ENCODE measurements at regions of chr1 and their contacts with region 1.

Region 1: DNA sequence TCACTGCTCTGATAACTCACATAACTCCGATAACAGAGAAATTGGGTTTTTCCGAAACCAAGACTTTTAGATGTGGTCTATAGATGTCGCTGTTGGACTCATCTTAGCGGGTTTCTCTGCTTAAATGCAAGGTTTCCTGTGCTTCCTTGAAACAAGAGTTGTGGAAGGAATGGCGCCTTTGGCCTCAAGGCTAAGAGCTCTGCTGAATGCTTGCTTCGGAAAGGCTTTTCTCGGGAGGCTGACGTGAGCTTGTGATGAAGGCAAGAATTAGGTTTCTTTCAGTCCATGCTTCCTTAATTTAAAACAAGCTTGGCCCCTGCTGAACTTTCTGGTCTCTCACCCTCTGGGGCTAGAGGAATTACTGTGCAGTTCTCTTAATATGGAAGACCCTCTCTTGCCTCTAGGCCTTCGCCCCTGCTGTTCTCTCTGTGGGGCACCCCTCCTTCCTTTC is 113.5 kb downstream of the MAP3K21 start:
- DNase-seq: peak; percentile 54
- ATAC-seq: peak; percentile 85
- H3K4me3 ChIP-seq: no peak overlapping the region
- H3K27ac ChIP-seq: no peak overlapping the region
- H3K4me1 ChIP-seq: no peaks in the 10 kb centered on the region
- H3K27me3 ChIP-seq: no peaks in the 10 kb centered on the region
- CTCF ChIP-seq: peak; percentile 60 to 86 (median 66)
- EP300 ChIP-seq: no peak
- POLR2A ChIP-seq: no peak
- RAD21 ChIP-seq: peak; percentile 98

Region 2: GRCh38 chr1:233394860-233395717 is 45.9 kb before region 1 on chr1:
- CTCF ChIA-PET with region 1: interaction called, 9 read pairs
- POLR2A ChIA-PET with region 1: no interaction called
- RAD21 ChIA-PET with region 1: interaction called, 7 read pairs
- SMC1A ChIA-PET with region 1: interaction called, 13 read pairs
- in situ Hi-C with region 1: no loop called
- intact Hi-C with region 1: no loop called
- DNase-seq: no peak
- ATAC-seq: peak; percentile 96
- H3K4me3 ChIP-seq: no peak overlapping the region
- H3K27ac ChIP-seq: no peak overlapping the region
- H3K4me1 ChIP-seq: no peaks in the 10 kb centered on the region
- H3K27me3 ChIP-seq: no peaks in the 10 kb centered on the region; a peak in 1 of 4 replicates
- CTCF ChIP-seq: peak; percentile 76 to 89 (median 77)
- EP300 ChIP-seq: no peak
- POLR2A ChIP-seq: no peak
- RAD21 ChIP-seq: peak; percentile 98

Region 3: DNA sequence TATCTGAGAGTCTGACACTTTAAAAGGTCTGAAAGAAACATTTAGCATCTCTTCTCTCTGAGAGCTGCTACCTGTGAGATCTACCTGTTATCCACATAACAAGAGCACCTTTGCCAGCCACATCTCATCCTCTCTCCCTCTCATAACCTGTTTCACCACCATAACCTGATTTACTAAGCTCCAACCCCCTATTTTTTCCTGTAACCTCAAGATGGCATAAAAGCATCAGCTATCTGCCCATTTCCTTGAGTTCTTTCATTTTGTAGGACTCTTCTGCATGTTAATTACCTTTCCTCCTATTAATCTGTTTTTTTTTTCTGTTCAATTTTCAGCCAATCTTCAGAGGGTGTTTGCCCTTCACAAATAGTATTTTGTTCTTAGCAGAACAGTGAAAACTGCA is 36.4 kb after region 1 on chr1:
- CTCF ChIA-PET with region 1: interaction called, 26 read pairs
- POLR2A ChIA-PET with region 1: no interaction called
- RAD21 ChIA-PET with region 1: interaction called, 13 read pairs
- SMC1A ChIA-PET with region 1: interaction called, 12 read pairs
- in situ Hi-C with region 1: no loop called
- intact Hi-C with region 1: no loop called
- DNase-seq: no peak
- ATAC-seq: no peak
- H3K4me3 ChIP-seq: no peak overlapping the region
- H3K27ac ChIP-seq: no peak overlapping the region
- H3K4me1 ChIP-seq: peaks cover 3% of the 10 kb centered on the region; the same call in 1 of the 2 replicates
- H3K27me3 ChIP-seq: no peaks in the 10 kb centered on the region
- CTCF ChIP-seq: peak in 1 of 3 experiments; percentile 31; a peak in 2 of 6 replicates
- EP300 ChIP-seq: no peak
- POLR2A ChIP-seq: no peak
- RAD21 ChIP-seq: peak; percentile 52

Region 4: DNA sequence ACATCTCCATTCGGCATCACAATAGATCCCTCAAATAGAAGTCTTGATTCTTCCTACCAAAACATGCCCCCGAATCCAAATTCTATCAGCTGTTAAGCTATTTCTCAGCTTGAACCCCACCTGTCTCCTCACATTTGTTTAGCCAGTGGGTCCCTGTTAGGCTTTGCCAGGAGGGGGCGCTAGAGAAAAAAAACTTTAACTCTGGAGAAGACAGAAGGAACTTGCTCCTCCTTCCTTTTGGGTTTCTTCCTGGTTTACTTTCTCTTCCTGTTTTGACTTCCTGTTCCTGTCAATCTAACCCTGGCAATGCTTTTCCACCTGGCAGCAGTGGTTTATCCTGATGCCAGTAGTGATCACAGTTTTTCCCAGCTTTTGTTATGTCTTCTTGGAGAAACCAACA is 77.4 kb after region 1 on chr1:
- CTCF ChIA-PET with region 1: interaction called, 32 read pairs
- POLR2A ChIA-PET with region 1: no interaction called
- RAD21 ChIA-PET with region 1: interaction called, 17 read pairs
- SMC1A ChIA-PET with region 1: interaction called, 24 read pairs
- in situ Hi-C with region 1: no loop called
- intact Hi-C with region 1: loop called (anchors 5 kb)
- DNase-seq: no peak
- ATAC-seq: peak; percentile 76
- H3K4me3 ChIP-seq: no peak overlapping the region
- H3K27ac ChIP-seq: no peak overlapping the region
- H3K4me1 ChIP-seq: no peaks in the 10 kb centered on the region
- H3K27me3 ChIP-seq: no peaks in the 10 kb centered on the region
- CTCF ChIP-seq: peak; percentile 32 to 64 (median 50)
- EP300 ChIP-seq: no peak
- POLR2A ChIP-seq: no peak
- RAD21 ChIP-seq: peak; percentile 67

Region 5: DNA sequence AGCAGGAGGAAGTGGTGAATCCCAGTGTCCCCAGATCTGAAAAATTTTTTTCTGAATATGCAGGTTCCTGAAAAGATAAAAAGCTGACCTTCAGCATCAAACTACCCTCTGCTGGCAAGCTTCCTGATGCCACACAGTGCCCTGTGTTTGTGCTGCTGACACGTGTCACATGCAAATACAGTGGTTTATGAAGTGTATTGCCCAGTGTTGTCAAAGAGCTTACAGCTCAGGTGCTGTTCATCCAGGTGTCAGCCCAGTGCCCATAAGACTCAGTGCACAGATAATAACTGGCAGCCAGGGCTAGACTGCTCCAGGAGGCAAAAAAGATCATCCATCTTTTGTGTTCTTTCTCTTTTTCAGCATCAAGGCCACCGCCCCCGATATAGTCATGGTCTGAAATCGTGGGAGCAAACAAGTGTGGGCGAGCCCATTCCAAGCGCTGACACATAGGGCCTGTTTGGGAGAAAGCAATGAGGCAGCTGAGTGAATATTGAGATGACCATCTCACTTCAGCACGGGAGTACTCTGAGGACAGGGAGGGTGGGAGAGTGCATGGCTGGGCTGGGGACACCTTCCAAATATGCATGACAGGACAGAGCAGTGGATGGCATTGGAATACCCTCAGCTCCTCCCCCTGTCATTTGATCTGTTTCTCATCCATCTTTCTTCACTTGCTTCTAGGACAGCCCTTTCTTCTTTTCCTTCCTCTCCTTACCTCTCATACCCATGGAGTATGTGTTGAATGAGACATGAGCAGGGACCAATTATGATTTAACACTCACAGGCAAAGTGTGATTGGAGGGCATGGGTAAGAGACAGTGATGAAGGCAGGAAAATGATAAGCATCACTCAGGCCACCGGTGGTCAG is 166.5 kb after region 1 on chr1:
- CTCF ChIA-PET with region 1: interaction called, 13 read pairs
- POLR2A ChIA-PET with region 1: no interaction called
- RAD21 ChIA-PET with region 1: interaction called, 3 read pairs
- SMC1A ChIA-PET with region 1: interaction called, 3 read pairs
- in situ Hi-C with region 1: no loop called
- intact Hi-C with region 1: no loop called
- DNase-seq: no peak
- ATAC-seq: peak; percentile 90
- H3K4me3 ChIP-seq: no peak overlapping the region
- H3K27ac ChIP-seq: no peak overlapping the region
- H3K4me1 ChIP-seq: peaks cover 11% of the 10 kb centered on the region
- H3K27me3 ChIP-seq: no peaks in the 10 kb centered on the region
- CTCF ChIP-seq: no peak
- EP300 ChIP-seq: no peak
- POLR2A ChIP-seq: no peak
- RAD21 ChIP-seq: no peak

Region 6: DNA sequence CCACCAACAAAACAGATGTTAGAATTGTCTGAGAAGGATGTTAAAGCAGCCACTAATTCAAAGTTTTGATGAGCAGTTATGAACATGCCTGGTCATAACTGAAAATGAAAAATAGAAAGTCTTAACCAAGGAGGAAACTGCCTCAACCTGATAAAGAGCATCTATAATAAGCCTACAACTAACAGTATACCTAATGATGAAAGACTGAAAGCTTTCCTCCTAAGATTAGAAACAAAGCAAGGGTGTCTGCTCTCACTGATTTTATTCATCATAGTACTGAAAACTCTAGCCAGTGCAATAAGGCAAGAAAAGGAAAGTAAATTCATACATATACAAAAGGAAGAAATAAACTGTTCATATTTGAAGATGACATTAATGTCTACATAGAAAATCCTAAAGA is 254.9 kb after region 1 on chr1:
- CTCF ChIA-PET with region 1: interaction called, 4 read pairs
- POLR2A ChIA-PET with region 1: no interaction called
- RAD21 ChIA-PET with region 1: interaction called, 9 read pairs
- SMC1A ChIA-PET with region 1: interaction called, 18 read pairs
- in situ Hi-C with region 1: no loop called
- intact Hi-C with region 1: no loop called
- DNase-seq: no peak
- ATAC-seq: peak; percentile 75
- H3K4me3 ChIP-seq: no peak overlapping the region
- H3K27ac ChIP-seq: no peak overlapping the region
- H3K4me1 ChIP-seq: peaks cover 5% of the 10 kb centered on the region; the same call in 1 of the 2 replicates
- H3K27me3 ChIP-seq: no peaks in the 10 kb centered on the region
- CTCF ChIP-seq: no peak
- EP300 ChIP-seq: no peak
- POLR2A ChIP-seq: no peak
- RAD21 ChIP-seq: no peak

Region 7: GRCh38 chr1:234065794-234066447 is 624.9 kb after region 1 on chr1:
- CTCF ChIA-PET with region 1: interaction called, 112 read pairs
- POLR2A ChIA-PET with region 1: no interaction called
- RAD21 ChIA-PET with region 1: interaction called, 69 read pairs
- SMC1A ChIA-PET with region 1: interaction called, 52 read pairs
- in situ Hi-C with region 1: no loop called
- intact Hi-C with region 1: loop called (anchors 2 kb)
- DNase-seq: peak; percentile 7
- ATAC-seq: peak; percentile 94
- H3K4me3 ChIP-seq: no peak overlapping the region
- H3K27ac ChIP-seq: no peak overlapping the region
- H3K4me1 ChIP-seq: no peaks in the 10 kb centered on the region
- H3K27me3 ChIP-seq: no peaks in the 10 kb centered on the region
- CTCF ChIP-seq: peak; percentile 71 to 78 (median 76)
- EP300 ChIP-seq: no peak
- POLR2A ChIP-seq: no peak
- RAD21 ChIP-seq: peak; percentile 82

Measured in GM12878 (cell line).